ENCODE measurements at regions of chr10 and their contacts with region 1.

Region 1: DNA sequence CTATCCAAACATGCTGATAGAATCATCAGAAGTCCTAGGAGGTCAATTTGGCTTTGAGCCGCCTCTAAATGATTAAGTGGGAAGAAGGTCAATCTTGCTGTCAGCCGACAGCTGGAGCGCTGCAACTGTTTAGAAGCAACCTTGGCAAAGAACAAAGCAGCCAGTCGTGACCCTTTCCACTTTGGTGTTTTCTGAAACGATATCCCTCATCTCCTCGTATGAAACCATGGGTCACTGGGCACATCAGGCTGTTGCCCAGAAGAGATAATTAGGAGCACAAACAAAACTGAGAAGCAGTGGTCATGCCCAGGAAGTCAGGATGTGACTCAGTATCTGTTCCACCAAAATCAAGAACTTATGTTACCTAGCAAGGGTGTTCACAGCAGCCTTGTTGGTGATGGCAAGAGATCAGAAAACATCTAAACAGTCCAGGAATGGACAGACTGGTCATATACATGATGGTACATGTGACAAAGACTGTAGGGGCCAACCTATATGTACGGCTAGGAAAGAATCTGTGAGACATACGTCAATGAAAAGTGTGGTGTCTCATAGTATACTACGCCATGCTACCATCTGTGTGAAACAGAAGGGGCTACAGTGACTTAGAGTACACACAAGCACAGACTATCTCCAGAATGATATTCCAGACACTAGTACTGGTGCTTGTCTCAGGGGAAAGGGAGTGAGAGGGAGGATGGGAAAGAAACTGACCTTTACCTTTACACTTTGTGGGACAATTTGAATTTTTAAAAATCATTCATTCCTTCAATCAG is 22.4 kb downstream of the STN1 start:
- DNase-seq: no peak
- ATAC-seq: no peak
- H3K4me3 ChIP-seq: no peak overlapping the region
- H3K27ac ChIP-seq: peak overlapping the region; percentile 82
- H3K4me1 ChIP-seq: peaks cover 46% of the 10 kb centered on the region
- H3K27me3 ChIP-seq: no peaks in the 10 kb centered on the region
- CTCF ChIP-seq: no peak

Region 2: DNA sequence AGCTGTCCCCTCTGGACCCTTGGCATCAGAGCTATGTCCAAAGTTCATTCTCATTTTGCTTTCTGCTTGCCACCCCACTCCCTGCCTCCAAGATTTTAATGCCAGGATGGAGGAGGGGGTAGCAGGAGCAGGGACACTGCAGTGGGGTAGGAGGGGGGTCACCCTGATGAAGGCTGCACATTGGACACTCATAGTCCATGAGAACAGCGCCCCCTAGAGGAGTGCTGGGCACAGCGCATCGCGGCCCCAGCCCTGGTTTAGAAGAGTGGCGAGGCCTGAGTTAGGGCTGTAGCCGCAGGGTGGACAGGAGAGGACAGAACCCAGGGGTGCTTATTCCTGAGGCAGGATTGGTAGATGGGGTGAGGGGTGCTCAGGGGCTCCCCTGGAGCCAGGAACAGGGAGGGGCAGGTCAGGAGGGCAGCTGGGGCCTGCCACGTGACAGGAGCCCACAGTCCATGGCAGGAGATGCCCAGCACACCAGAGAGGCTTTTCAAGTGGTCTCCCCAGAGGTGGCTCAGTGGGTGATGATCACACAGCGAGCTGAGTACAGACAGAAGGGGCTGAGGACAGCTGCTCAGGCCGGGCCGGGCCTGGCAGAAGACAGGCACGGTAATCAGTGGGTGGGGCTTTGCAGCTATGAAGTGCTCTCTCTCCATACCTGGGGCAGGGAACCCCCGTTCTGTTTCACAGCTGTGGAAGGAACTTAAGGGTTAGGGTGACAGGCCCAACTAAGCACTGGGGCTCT is 330.7 kb before region 1 on chr10:
- intact Hi-C with region 1: no loop called
- DNase-seq: no peak
- ATAC-seq: peak; percentile 55
- H3K4me3 ChIP-seq: no peak overlapping the region
- H3K27ac ChIP-seq: no peak overlapping the region
- H3K4me1 ChIP-seq: no peaks in the 10 kb centered on the region
- H3K27me3 ChIP-seq: peaks cover 5% of the 10 kb centered on the region
- CTCF ChIP-seq: peak; percentile 48

Region 3: GRCh38 chr10:103685880-103686669 is 209.5 kb before region 1 on chr10:
- intact Hi-C with region 1: no loop called
- DNase-seq: peak; percentile 86
- ATAC-seq: peak; percentile 92
- H3K4me3 ChIP-seq: no peak overlapping the region
- H3K27ac ChIP-seq: no peak overlapping the region
- H3K4me1 ChIP-seq: no peaks in the 10 kb centered on the region
- H3K27me3 ChIP-seq: no peaks in the 10 kb centered on the region
- CTCF ChIP-seq: peak; percentile 97

Region 4: DNA sequence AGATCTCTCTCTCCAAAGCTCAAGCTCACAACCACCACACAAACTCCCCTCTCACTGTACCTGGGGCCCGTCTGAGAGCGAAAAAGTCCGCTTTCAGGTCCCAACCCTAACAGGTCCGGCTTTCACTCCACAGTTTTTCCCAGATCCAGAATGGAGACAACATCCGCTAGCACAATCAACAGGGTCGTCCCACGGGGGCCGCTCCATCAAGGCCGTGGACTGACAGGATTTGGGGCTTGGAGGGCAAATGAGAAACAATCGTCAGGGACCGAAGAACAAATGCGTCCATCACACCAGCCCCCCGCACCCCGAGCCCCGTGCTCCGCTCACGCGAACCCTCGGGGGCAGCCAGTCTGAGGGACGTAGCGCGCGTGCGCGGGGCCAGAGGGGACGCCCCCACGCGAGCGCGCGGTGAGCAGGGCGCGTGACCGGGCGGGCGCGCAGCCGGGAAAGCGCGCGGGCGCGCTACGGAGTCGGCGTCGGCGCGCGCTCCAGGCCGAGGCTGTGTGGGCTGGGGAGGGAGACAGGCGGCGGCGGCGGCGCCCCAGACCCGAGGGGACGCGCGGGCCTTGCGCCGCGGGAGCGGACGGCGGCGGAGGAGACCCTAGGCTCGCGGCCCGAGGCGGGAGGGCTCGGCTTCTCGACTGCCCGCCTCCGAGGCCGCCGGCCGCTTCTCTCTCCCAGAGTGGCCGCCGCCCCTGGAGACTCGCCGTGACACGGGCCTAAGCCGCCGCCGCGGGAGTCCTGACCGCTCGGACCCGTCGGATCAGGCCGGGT is 71.3 kb after region 1 on chr10 and contains the start of gene SLK:
- intact Hi-C with region 1: loop called (anchors 10 kb)
- DNase-seq: peak; percentile 93
- ATAC-seq: peak; percentile 99
- H3K4me3 ChIP-seq: peak within 1 kb of the TSS; percentile 61
- H3K27ac ChIP-seq: peak within 1 kb of the TSS; percentile 95
- H3K4me1 ChIP-seq: peaks cover 27% of the 10 kb centered on the region
- H3K27me3 ChIP-seq: no peaks in the 10 kb centered on the region
- CTCF ChIP-seq: no peak
- total RNA-seq, gene SLK: 46.7 TPM

Measured in upper lobe of right lung (tissue), 1 donor.